ENCODE measurements at regions of chr1 and their contacts with region 1.

Region 1: DNA sequence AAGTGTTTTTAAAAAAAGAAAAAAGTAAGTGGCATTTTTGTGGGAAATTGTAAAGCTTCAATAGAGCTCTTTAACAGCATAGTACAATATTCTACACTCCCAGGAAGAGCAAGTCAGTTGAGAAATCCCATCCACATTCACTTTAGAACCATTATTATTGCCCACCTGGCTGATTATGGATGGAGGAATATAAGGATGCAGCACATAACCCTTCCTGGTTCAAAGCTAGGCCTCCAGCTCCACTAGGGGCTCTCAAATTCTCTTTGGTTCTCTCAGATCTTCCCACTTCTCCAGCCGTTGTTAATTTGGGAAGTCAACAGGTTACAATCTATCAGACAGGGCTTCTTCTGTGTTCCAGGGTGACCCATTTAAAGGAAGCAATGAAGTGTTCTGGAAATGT is 198.1 kb downstream of the NTNG1 start:
- DNase-seq: no peak
- H3K4me3 ChIP-seq: no peak overlapping the region
- H3K27ac ChIP-seq: no peak overlapping the region
- H3K4me1 ChIP-seq: peaks cover 32% of the 10 kb centered on the region
- H3K27me3 ChIP-seq: no peaks in the 10 kb centered on the region
- CTCF ChIP-seq: no peak

Region 2: GRCh38 chr1:106063510-106063909 is 1275.4 kb before region 1 on chr1:
- CTCF ChIA-PET with region 1: no interaction called
- POLR2A ChIA-PET with region 1: interaction called, 10 read pairs
- intact Hi-C with region 1: no loop called
- DNase-seq: peak; percentile 48
- H3K4me3 ChIP-seq: no peak overlapping the region
- H3K27ac ChIP-seq: no peak overlapping the region
- H3K4me1 ChIP-seq: peaks cover 9% of the 10 kb centered on the region
- H3K27me3 ChIP-seq: no peaks in the 10 kb centered on the region
- CTCF ChIP-seq: no peak

Region 3: DNA sequence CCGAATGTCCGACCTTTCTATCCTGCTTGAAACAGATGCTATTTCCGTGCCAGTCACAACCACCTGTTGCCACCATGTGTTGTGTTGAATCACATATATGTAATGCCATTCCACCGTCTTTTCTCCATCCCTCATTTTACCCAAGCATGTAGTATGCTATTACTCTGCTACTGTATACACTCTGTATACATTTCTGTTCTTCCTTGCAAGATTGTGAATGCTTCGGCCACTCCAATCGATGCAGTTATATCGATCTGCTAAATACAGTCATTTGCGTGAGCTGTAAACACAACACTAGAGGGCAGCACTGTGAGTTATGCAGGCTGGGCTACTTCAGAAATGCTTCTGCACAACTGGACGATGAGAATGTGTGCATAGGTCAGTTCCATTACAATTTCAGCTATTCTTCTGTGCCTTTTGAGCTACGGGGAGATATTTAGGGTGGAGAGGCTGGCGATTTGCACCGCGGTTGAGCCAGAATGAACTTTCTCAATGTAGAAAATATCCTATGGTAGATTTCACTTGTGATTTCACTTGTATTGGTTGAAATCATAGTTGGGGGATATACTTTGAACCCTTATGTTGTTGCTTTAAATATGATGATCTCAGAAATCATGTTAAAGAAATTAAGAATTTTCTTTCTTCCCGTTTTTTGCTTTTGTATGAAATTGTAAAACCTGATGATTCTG is 91.7 kb after region 1 on chr1:
- CTCF ChIA-PET with region 1: no interaction called
- POLR2A ChIA-PET with region 1: no interaction called
- intact Hi-C with region 1: no loop called
- DNase-seq: peak; percentile 65
- H3K4me3 ChIP-seq: no peak overlapping the region
- H3K27ac ChIP-seq: no peak overlapping the region
- H3K4me1 ChIP-seq: peaks cover 25% of the 10 kb centered on the region
- H3K27me3 ChIP-seq: no peaks in the 10 kb centered on the region
- CTCF ChIP-seq: peak; percentile 85